ENCODE measurements at regions of chr19 and their contacts with region 1.

Region 1: DNA sequence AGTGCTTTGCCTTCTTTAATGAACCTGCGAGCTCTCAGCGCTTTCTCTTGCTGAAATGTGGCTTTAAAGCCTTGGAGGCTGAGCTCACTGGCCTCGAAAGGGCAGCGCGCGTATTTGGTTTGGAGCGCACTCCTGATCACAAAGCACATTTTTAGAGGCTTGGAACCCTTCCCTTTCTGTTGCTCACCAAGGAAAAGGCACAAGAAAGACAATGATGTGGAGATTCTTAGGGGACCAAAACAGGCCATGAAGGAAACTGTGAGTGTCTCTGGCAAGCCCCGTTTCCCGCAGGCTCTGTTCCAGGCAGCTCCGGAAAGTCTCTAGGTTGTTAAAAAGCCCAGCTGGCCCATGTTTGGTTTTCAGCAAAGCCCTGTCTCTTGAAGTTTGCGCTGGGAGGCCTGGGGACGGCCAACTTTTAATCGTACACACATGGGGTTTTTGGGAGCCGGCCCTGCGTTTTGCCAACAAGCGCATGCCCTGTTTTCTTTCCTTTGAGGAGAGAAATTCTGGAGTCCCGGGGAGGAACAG is 9.4 kb upstream of the SPC24 start:
- DNase-seq: peak; percentile 80 to 87
- ATAC-seq: peak; percentile 61 to 87 (median 76)
- H3K4me3 ChIP-seq: peak overlapping the region in 2 of 10 donors; percentile 11
- H3K27ac ChIP-seq: peak overlapping the region; percentile 70 to 91 (median 83)
- H3K4me1 ChIP-seq: peaks cover 11 to 46% (median 35%) of the 10 kb centered on the region in 9 donors
- H3K27me3 ChIP-seq: no peaks in the 10 kb centered on the region
- CTCF ChIP-seq: no peak

Region 2: GRCh38 chr19:10975374-10976130 is 189.4 kb before region 1 on chr19:
- intact Hi-C with region 1: no loop called
- DNase-seq: peak; percentile 53 to 62
- ATAC-seq: peak in 7 of 8 donors; percentile 50 to 82 (median 66)
- H3K4me3 ChIP-seq: peak overlapping the region in 4 of 10 donors; percentile 18 to 21 (median 20)
- H3K27ac ChIP-seq: peak overlapping the region; percentile 6 to 75 (median 52)
- H3K4me1 ChIP-seq: peaks cover 17 to 48% (median 31%) of the 10 kb centered on the region in 9 donors
- H3K27me3 ChIP-seq: no peaks in the 10 kb centered on the region
- CTCF ChIP-seq: no peak

Region 3: GRCh38 chr19:11090054-11090900 is 74.7 kb before region 1 on chr19:
- intact Hi-C with region 1: no loop called
- DNase-seq: peak; percentile 98 to 99
- ATAC-seq: peak; percentile 91 to 97 (median 92)
- H3K4me3 ChIP-seq: peak overlapping the region; percentile 53 to 90 (median 70)
- H3K27ac ChIP-seq: peak overlapping the region; percentile 91 to 99 (median 96)
- H3K4me1 ChIP-seq: peaks cover 0 to 78% (median 58%) of the 10 kb centered on the region in 9 donors
- H3K27me3 ChIP-seq: no peaks in the 10 kb centered on the region
- CTCF ChIP-seq: no peak

Region 4: GRCh38 chr19:11115895-11116446 is 49.0 kb before region 1 on chr19:
- intact Hi-C with region 1: loop called in 1 of 10 experiments (anchors 1 kb)
- DNase-seq: no peak
- ATAC-seq: peak in 3 of 8 donors; percentile 4 to 29 (median 14)
- H3K4me3 ChIP-seq: no peak overlapping the region
- H3K27ac ChIP-seq: no peak overlapping the region
- H3K4me1 ChIP-seq: no peaks in the 10 kb centered on the region
- H3K27me3 ChIP-seq: no peaks in the 10 kb centered on the region
- CTCF ChIP-seq: no peak

Region 5: DNA sequence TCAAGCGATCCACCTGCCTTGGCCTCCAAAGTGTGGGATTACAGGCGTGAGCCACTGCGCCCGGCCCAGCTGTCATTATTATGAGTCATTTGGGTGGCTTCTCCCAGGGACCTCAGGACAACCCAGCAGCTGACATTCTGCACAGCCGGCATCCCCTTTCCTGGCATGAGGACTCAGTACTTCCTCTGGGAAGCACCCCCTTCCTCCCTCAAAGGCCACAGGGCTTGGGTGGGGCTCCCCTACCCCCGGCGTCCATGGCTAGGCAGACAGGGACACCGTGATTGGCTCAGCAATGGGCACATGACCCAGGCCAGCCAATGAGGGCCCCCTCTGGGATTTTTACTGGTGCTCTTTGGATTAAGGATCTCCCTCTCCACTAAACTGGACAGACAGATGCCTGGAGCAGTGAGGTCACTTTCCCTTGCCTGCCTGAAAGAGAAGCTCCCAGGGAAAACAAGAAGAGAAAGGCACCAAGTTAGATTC is 26.4 kb after region 1 on chr19:
- intact Hi-C with region 1: loop called in 1 of 10 experiments (anchors 2 kb)
- DNase-seq: peak; percentile 72 to 85
- ATAC-seq: peak; percentile 66 to 91 (median 76)
- H3K4me3 ChIP-seq: peak overlapping the region in 2 of 10 donors; percentile 3 to 7
- H3K27ac ChIP-seq: peak overlapping the region; percentile 9 to 97 (median 74)
- H3K4me1 ChIP-seq: peaks cover 31 to 93% (median 85%) of the 10 kb centered on the region in 9 donors
- H3K27me3 ChIP-seq: peaks cover 0 to under 1% (median 0%) of the 10 kb centered on the region in 7 donors
- CTCF ChIP-seq: no peak